ENCODE measurements at regions of chr16 and their contacts with region 1.

Region 1: DNA sequence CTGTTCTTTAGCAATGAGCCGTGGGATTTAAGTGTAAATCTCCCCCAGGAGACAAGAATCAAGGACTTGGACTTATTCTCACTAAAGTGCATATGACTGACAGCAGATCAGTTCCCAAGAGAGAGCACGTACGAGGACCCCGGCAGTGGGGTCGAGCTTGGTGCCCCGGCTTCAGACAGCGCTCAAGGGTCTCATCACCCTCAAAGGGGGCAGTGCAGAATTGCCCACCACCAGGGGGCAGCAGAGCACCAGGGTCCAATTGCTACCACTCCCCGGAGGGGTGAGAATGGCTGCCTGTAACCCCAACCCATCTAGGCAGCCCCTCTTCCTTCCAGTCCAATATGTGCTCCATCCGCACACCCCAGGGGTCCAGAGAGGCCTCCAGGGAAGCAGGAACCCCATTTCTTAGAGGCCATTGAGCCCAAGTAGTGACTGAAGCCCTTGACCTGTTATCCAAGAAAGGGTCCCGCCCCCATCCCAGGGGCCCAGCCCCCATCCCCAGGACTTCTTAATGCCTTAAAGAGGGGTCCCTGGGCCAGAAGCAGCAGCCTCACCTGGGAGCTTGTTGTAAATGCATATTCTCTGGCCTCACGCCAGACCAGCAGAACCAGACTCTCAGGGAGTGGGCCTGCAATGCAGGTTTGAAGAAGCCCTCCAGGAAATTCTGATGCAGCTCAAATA is 86.1 kb downstream of the ZDHHC7 start:
- DNase-seq: peak; percentile 81
- H3K4me3 Mint-ChIP-seq: no peak overlapping the region
- H3K27ac Mint-ChIP-seq: no peak overlapping the region
- H3K4me1 Mint-ChIP-seq: no peaks in the 10 kb centered on the region
- H3K27me3 Mint-ChIP-seq: peaks cover 12% of the 10 kb centered on the region

Region 2: GRCh38 chr16:84952335-84953189 is 27.3 kb after region 1 on chr16:
- CTCF ChIA-PET with region 1: interaction called, 37 read pairs
- DNase-seq: peak; percentile 79
- H3K4me3 Mint-ChIP-seq: no peak overlapping the region
- H3K27ac Mint-ChIP-seq: no peak overlapping the region
- H3K4me1 Mint-ChIP-seq: no peaks in the 10 kb centered on the region
- H3K27me3 Mint-ChIP-seq: peaks cover 36% of the 10 kb centered on the region

Region 3: DNA sequence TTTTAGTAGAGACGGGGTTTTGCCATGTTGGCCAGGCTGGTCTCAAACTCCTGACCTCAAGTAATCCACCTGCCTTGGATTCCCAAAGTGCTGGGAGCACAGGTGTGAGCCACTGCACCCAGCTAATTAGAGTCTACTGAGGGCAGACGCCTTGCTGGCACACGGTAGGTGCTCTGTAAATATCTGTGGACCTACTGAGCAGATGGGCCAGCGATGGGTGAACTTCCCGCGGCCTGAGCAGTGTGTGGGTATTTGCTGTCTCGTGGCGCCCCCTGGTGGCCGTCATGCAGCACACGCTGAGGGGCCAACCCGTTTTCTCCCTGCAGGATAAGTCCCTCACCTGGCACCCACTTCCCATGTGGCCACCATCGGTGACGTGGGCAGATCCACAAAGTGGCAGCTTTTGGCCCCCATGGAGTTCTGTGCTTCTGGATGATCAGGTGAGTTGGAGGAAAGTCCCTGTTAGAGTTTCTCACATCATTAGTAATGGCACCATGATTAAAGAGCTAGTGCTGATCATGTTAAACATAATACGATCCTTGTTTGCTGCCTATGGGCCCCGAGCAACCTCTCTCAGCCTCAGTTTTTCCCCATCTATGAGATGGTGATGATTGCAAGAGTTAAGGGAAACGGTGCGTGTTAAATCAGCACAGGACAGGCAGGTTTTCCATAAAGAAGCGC is 45.4 kb after region 1 on chr16:
- CTCF ChIA-PET with region 1: interaction called, 32 read pairs
- DNase-seq: peak; percentile 84
- H3K4me3 Mint-ChIP-seq: no peak overlapping the region
- H3K27ac Mint-ChIP-seq: no peak overlapping the region
- H3K4me1 Mint-ChIP-seq: peaks cover 4% of the 10 kb centered on the region
- H3K27me3 Mint-ChIP-seq: peaks cover 24% of the 10 kb centered on the region

Measured in activated naive CD4-positive, alpha-beta T cell treated with anti-CD3 and anti-CD28 coated beads, Interleukin-2, amount 10 ng/mL, durations not matched to agents 7 days and 5 days (primary cell).